HCT116 (cell line): ENCODE measurements at regions of chr13 and their contacts with region 1.

Region 1: DNA sequence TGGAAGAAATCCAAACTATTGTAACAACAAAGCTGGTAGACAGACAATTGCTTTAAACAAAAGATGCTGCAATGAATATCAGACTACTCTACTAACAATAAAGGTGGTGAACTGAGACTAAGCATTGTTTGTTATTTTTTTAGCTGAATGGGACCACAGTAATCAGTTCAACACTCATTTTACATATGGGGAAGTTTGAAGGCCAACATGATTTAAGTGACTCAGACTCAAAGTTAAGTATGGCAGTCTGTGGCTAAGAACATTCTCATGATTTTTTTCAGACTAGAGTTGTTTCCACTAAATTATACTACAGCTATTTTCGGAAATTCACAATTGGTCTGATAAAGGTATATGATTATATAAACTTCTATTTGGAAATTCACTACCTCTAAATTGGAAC is 10.4 kb downstream of the EXOSC8 start:
- DNase-seq: no peak
- ATAC-seq: no peak
- H3K4me3 ChIP-seq: no peak overlapping the region
- H3K27ac ChIP-seq: no peak overlapping the region
- H3K4me1 ChIP-seq: no peaks in the 10 kb centered on the region
- H3K27me3 ChIP-seq: no peaks in the 10 kb centered on the region
- CTCF ChIP-seq: no peak
- POLR2A ChIP-seq: no peak
- RAD21 ChIP-seq: no peak

Region 2: GRCh38 chr13:37049810-37050209 is 38.8 kb after region 1 on chr13:
- CTCF ChIA-PET with region 1: no interaction called
- POLR2A ChIA-PET with region 1: no interaction called
- RAD21 ChIA-PET with region 1: no interaction called
- intact Hi-C with region 1: loop called (anchors 5 kb)
- DNase-seq: no peak
- ATAC-seq: peak; percentile 42; the same call in 1 of the 2 replicates
- H3K4me3 ChIP-seq: no peak overlapping the region
- H3K27ac ChIP-seq: no peak overlapping the region
- H3K4me1 ChIP-seq: no peaks in the 10 kb centered on the region
- H3K27me3 ChIP-seq: no peaks in the 10 kb centered on the region
- CTCF ChIP-seq: peak in 2 of 3 experiments; percentile 37 to 53; a peak in 3 of 6 replicates
- POLR2A ChIP-seq: no peak
- RAD21 ChIP-seq: no peak